ENCODE measurements at regions of chr12 and their contacts with region 1.

Region 1: DNA sequence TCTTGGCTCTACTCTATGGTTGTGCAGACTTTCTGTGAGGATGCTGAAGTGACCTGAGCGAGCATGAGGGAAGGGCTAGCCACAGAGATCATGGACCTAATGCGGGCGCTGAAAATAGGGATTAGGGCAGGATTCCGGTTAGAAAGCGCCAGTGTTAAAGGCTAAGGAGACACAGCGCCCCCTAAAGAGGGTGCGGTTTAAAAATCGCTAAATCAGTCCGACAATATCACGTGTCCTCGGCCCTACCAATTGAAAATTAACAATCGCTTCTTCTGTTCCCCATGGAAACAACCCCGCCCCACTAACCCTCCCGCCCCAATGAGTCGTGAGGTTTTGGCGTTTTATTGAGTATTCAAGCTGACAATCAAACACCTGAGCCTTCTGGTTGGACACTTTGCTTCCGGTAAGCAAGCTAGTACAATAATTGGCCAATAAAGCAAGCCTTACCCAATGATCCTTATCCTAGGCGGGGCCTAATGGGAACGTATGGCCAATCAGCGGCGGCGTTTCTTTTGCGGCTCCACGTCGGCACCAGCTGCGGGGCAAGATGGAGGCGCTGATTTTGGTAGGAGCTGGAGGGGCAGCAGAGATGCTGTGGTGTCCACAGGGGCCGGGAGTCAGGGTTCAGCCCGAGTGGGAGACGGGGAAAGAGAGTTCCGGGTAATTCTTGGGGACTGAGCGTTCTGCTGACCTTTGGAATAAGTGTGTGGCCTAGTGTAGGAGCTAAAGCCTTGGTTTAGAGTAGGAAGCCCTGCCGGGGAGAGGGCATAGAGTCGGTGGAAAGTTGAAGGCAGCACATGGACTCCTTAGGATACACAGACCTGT is at the start of gene COPZ1:
- DNase-seq: peak; percentile 87 to 97
- H3K4me3 ChIP-seq: peak within 1 kb of the TSS; percentile 79 to 97 (median 88)
- H3K27ac ChIP-seq: peak within 1 kb of the TSS; percentile 83
- H3K4me1 ChIP-seq: peaks cover 0 to 10% (median 4%) of the 10 kb centered on the region in 4 experiments; a peak in 2 of 7 replicates
- H3K27me3 ChIP-seq: no peaks in the 10 kb centered on the region
- CTCF ChIP-seq: peak; percentile 57 to 89 (median 81)
- EP300 ChIP-seq: no peak
- POLR2A ChIP-seq: peak; percentile 54 to 87
- RAD21 ChIP-seq: peak; percentile 80 to 82
- total RNA-seq, gene COPZ1: 94.2 and 103 TPM in 2 replicates

Region 2: DNA sequence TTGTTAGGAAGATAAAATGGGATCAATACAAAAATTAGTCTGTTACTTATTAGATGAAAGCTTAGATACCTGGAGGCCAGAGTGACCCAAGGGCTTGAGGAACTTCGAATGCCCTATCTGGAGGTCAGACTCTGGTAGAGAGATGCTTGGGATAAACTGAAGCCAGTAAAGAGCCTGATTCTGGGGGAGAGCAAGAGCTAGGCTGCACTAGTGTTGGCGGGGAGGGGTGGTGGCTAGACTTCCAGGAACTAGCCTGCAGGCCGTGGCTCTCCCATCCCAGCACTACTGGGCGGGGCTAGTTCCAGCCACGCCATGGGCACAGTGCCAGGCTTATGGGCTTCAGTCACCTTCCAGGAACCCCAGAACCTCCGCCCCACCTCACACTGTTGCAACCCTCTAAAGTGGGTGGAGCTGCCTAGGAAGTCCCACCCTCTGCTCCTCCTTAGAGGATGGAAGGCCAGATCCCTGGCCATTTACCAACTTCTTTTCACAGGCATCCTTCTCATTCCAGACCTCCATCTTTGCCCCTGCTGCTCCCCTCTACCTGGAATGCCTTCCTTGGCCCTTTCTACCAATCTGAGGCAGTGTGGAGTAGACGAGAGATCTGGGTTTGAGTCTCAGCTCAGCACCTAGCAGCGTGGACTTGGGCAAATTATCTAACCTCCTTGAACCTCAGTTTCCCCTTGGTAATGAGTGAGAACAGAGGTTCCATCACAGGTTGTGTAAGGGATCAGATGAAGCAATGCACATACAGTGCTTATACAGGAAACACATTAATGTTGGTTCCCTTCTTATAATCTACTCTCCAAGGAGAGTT is 17.7 kb before region 1 on chr12:
- CTCF ChIA-PET with region 1: interaction called, 618 read pairs
- POLR2A ChIA-PET with region 1: interaction called, 10 read pairs
- DNase-seq: no peak
- H3K4me3 ChIP-seq: no peak overlapping the region
- H3K27ac ChIP-seq: no peak overlapping the region
- H3K4me1 ChIP-seq: peaks cover 4 to 18% (median 12%) of the 10 kb centered on the region in 4 experiments
- H3K27me3 ChIP-seq: no peaks in the 10 kb centered on the region
- CTCF ChIP-seq: no peak
- EP300 ChIP-seq: no peak
- POLR2A ChIP-seq: no peak
- RAD21 ChIP-seq: no peak